Cardiac septum (tissue), 1 donor: ENCODE measurements at regions of chr6 and their contacts with region 1.

Region 1: DNA sequence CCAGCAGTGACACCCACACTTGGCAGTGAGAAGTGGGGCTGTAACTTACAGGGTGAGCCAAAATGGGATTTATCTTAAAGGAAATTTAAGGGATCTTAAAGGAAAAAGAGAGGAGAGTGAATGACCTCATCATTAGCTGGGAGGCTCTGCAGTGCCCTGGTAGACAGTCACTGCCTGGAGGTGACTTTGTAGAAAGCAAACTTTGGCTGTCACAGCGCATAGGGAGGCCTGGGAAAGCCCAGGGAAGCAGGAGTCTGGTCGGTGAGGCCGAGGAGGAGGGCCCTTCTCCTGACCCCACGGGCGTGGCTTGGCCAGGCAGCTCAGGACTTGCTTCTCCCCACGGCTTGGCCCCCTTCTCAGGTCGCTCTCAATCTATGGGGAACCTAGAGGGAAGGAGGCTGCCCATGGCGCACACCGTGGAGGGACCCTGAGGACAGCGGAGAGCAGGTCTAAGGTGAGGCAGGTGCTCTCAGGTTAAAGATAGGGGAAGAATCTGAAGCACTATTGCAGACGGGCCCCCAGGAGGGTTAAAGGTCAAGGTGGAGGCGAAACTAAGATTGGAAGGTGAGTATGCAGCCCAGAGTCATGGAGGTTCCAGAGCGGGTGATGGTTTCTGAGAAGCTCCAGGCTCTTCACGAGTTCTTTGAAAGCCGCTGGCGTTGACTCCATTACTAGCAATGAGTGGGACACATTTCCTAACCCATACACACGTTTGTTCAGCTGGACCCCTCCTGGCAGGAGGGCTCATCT is 15.6 kb upstream of the RIPK1 start:
- DNase-seq: no peak

Region 2: DNA sequence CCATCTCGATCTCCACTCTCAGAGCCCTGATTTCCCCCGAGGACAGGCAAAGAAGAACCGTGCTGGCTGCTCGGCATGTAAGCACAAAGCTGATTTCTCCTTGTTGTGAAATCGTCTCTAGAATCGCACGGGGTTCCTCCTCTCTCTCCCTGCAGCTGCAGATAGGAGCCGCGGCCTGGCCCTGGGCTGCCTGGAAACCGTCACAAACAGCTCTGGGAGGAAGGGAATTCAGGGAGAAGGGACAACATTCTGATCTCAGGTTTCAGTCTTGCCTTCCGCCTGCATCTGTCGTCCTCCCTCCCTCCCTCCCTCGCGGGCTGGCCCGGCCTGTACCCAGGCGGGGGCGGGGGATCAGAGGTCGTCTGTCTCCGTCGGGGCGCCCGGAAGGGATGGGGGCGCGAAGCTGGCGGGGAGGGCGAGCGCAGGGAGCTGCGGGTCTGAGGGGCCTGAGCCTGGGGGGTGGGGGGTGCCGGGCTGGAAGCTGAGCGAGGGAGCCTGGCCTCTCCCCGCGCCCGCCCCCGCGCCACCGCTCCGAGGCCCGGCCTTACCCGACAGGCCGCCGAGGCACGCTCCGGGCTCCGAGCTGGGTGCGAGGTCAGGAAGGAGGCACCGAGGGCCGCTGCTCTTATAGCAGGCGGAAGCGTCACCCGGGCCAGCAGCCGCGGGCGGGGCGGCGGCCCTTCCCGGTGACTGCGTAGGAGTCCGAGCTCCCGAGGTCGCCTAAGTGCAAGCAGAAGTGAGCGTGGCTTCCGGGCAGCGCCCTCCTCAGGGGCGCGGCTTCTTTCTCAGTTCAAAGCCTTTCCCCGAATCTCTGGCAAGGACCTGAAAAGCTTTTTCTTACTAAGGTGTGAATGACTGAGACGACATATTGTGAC is 211.2 kb before region 1 on chr6 and contains the start of gene SERPINB1:
- intact Hi-C with region 1: loop called (anchors 10 kb)
- DNase-seq: peak; percentile 97
- total RNA-seq, gene SERPINB1: 26.4 TPM

Region 3: GRCh38 chr6:2989332-2990247 is 63.1 kb before region 1 on chr6:
- intact Hi-C with region 1: no loop called
- DNase-seq: peak; percentile 88

Region 4: DNA sequence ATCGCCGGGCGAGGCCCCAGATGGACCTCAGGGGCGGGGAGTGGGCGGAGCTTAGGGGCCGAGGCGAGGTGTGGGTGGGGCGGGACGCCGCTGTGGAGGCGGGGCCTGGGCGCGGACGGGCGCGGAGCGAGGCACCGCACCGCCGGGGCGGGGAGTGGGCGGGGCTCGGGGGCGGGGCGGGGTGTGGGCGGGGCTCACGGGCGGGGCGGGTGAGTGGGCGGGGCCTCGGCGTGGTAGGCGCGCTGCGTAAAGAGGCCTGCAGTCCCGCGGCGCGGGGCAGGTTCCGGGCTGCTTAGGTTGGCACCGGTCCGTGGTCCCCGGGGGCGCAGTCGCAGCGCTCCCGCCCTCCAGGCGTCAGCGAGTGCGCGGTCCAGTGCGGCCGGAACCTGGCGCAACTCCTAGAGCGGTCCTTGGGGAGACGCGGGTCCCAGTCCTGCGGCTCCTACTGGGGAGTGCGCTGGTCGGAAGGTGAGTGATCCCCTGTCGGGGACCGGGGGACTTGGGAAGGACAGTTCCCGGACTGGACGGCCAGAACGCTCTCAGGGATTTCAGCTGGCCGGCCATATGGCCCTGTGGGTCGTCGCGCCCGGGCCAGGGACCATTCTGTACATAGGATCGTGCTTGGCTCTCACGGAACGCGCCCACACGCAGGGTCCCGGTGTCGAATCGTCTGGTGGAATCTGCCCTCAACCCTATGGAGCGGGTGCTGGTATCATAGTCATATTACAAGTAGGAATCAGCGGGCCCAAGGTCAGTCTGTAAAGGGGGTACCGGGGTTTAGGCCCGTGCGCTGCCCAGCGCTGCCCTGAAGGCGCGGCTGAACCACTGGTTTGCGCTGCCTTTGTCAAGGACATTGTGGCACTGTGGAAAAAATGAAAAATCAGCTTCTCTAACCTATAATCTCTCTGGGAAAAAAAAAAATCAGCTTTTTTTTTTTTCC is 52.8 kb before region 1 on chr6 and contains the start of gene NQO2:
- intact Hi-C with region 1: loop called (anchors 2 kb)
- DNase-seq: peak; percentile 98
- total RNA-seq, gene NQO2: 37.9 TPM

Region 5: DNA sequence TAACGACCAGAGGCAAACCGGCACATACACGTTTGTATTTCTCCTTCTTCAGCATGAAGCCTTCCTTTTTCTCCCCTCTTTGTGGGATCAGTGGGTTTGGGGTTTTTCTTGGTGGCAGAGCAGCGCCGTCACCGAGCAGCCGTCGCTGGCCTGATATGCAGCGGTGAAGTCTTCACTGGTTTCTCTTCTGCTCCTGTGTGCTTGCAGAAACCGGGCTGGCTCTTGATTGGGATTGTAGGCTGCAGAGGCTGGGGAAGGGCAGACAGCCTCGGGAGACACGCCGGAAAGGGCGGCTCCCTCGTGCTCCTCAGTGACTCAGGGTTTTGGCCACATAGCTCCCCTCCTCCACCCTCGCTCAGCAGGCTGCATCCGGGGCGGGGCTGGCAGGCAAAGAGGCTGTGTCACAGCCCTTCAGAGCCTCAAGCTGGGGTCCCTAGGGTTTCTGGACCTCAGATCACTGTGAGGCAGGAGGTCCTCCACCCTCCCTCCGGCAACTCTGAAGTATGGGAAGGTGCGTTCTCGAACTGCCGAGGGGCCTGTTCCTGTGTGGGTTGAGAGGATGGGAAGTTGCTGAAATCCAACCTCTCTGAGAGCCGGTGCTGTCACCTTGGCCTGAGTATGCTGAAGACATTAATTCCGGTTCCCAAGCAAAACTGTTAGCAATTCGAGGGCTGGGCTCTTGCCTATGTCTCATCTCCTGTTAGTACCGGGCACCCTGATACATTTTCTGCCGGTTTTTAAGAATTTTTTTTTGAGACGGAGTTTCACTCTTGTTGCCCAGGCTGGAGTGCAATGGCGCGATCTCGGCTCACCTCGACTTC is 28.8 kb before region 1 on chr6:
- intact Hi-C with region 1: loop called (anchors 1 kb)
- DNase-seq: peak; percentile 98